ENCODE measurements at regions of chr17 and their contacts with region 1.

Region 1: DNA sequence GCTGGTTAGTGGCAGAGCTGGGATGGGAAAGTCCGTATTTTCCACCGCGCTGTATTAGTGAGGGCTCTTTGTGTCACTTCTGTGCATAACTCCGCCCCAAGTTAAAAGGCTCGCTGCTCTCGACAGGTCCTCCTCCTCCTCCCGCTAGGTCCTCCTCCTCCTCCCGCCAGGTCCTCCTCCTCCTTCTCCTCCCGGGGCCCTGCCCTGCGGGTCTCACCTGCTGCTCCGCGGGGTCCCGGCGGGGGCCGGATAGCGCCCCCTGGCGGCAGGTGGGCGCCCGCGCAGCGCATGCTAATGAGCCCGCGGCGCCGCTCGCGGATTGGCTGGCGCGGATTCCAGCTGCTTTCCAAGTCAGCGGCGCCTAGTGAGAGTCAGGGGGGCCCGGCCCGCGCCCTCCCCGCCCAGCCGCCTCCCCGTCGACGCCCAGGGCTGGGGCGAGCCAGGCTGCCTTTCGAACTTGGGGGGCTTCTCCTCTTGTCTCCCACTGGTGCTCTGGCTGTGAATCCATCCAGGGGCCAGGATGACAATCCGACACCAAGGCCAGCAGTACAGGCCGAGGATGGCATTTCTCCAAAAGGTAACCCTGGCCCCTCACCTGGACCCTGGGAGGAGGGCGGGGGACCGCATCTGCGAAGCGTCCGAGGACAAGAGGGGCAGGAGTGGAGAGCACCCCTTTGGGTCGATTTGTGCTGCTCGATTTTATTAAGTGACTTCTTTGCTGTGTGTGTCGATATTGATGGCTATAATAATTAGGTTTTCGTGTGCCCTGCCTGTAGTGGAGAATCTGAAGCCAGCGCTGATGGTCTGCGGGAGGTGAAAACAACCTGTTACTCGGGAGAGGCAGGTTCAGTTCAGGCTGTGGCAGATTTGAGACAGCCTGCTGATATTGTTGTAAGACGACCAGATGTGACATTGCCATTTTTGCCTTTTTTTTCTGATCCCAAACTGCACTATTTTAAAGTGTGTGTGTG is at the start of gene RGS9:
- DNase-seq: peak; percentile 90
- ATAC-seq: peak; percentile 89
- H3K4me3 ChIP-seq: peak within 1 kb of the TSS; percentile 64
- H3K27ac ChIP-seq: no peak within 1 kb of the TSS
- H3K4me1 ChIP-seq: peaks cover 15% of the 10 kb centered on the region; the same call in 1 of the 2 replicates
- H3K27me3 ChIP-seq: no peaks in the 10 kb centered on the region
- CTCF ChIP-seq: peak; percentile 95
- total RNA-seq, gene RGS9: 2.7 and 3.4 TPM in 2 replicates

Region 2: DNA sequence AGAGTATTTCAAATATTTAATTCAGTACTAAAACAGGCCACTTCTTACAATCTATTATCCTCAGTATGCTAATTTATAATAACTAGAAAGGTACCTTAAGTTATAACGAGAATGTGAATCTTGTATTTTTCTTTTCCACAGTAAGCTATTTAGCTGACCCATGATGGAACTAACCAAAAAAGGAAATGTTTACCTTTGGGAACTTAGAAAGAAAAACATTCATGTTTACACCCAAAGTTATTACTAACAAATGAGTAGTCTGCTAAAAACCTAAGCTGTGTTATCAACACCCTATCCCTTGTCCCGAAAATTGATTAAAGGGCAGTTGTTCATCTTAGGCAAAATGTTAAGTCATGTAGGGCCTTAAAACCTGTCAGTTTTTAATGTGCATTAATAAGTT is 88.9 kb before region 1 on chr17:
- CTCF ChIA-PET with region 1: no interaction called
- POLR2A ChIA-PET with region 1: no interaction called
- intact Hi-C with region 1: no loop called
- DNase-seq: no peak
- ATAC-seq: no peak
- H3K4me3 ChIP-seq: no peak overlapping the region
- H3K27ac ChIP-seq: no peak overlapping the region
- H3K4me1 ChIP-seq: no peaks in the 10 kb centered on the region
- H3K27me3 ChIP-seq: no peaks in the 10 kb centered on the region
- CTCF ChIP-seq: no peak

Region 3: GRCh38 chr17:65122836-65123756 is 14.2 kb before region 1 on chr17:
- CTCF ChIA-PET with region 1: interaction called, 3 read pairs
- POLR2A ChIA-PET with region 1: no interaction called
- intact Hi-C with region 1: loop called (anchors 1 kb)
- DNase-seq: peak; percentile 86
- ATAC-seq: peak; percentile 39
- H3K4me3 ChIP-seq: peak overlapping the region; percentile 50
- H3K27ac ChIP-seq: peak overlapping the region; percentile 91
- H3K4me1 ChIP-seq: peaks cover 33% of the 10 kb centered on the region
- H3K27me3 ChIP-seq: no peaks in the 10 kb centered on the region
- CTCF ChIP-seq: no peak

Region 4: GRCh38 chr17:65147955-65148354 is 10.6 kb after region 1 on chr17:
- CTCF ChIA-PET with region 1: no interaction called
- POLR2A ChIA-PET with region 1: no interaction called
- intact Hi-C with region 1: no loop called
- DNase-seq: no peak
- ATAC-seq: no peak
- H3K4me3 ChIP-seq: no peak overlapping the region
- H3K27ac ChIP-seq: no peak overlapping the region
- H3K4me1 ChIP-seq: no peaks in the 10 kb centered on the region
- H3K27me3 ChIP-seq: no peaks in the 10 kb centered on the region
- CTCF ChIP-seq: no peak

Region 5: DNA sequence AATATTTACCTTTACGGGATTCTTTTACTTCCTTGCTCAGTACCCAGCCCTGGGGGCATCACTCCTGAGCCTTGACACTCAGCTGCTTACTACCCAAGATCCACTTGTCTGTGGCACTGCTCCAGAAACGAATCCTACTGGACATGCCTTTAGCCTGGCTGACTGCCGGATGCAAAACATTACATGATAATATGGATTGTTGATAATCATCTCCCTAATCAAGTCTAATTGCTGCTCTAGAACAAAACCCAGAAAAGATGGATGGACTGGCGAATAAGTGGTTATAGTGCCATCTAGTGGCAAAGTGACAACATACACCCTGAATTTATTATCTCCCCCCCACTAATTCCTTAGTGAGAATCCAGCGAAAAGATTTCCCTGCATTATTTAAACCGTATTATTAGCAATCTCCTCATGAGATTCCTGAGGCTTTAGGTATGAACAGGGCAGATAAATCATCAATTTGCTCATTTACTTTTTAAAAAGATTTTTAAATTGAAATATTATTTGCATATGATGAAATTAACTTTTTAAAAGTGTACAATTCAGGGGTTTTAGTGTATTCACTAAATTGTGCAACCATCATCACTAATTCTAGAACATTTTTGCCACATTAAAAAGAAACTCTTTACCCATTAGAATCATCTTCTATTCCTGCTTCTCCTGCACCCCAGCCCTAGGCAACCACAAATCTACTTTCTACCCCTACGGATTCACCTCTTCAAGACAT is 61.5 kb after region 1 on chr17:
- CTCF ChIA-PET with region 1: no interaction called
- POLR2A ChIA-PET with region 1: no interaction called
- intact Hi-C with region 1: loop called (anchors 2 kb)
- DNase-seq: peak; percentile 84
- ATAC-seq: peak; percentile 64
- H3K4me3 ChIP-seq: no peak overlapping the region
- H3K27ac ChIP-seq: no peak overlapping the region
- H3K4me1 ChIP-seq: 0 out of 2 replicates have a peak, but pooled peaks cover 6% of the 10 kb centered on the region
- H3K27me3 ChIP-seq: no peaks in the 10 kb centered on the region
- CTCF ChIP-seq: peak; percentile 96

Measured in PC-3 (cell line).